K562 (cell line): ENCODE measurements at regions of chr6 and their contacts with region 1.

Region 1: DNA sequence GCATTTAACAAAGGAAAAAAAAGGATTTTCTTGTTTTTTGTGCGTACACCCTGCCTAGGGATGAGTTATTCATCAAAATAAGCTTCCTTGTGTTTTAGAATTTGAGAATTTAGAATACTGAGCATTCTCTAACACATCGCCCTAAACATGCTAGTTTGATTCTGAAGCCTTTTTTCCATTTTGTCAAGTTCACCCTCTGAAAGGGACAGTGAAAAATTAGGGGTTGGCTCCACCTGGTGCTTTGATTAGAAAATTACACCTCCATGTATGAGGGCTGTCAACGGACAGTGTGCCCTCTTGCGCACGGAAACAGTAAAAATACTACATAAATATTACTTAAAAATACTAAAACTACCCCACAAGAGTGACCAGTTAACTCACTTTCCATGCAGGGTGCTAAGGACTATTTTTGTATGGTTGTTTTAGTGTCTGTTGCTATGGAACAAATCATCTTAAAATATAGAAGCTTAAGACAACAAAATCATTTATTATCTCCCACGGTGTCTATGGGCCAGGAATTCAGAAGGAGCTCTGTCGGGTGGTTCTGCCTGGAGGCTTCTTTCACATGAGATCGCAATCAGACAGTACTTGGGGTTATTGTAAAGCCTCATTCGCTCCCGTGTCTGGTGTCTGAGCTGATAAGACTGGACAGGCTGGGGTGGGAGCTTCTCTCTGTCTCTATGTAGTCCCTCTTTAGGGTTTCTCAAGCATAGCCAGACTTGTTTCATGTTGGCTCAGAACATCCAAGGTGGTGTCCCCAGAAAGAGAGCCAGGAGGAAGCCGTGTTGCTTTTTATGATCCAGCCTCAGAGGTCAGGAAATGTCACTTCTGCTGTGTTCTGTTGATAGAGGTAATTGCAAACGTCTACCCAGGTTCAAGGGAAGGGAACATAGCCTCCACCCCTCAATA is 41.1 kb upstream of the TMEM170B start:
- DNase-seq: peak; percentile 79 to 85 (median 81)
- ATAC-seq: peak; percentile 98
- H3K4me3 ChIP-seq: no peak overlapping the region
- H3K27ac ChIP-seq: no peak overlapping the region
- H3K4me1 ChIP-seq: no peaks in the 10 kb centered on the region
- H3K27me3 ChIP-seq: peaks cover 0 to 4% of the 10 kb centered on the region in 2 experiments; a peak in 1 of 5 replicates
- CTCF ChIP-seq: peak; percentile 88 to 99 (median 99)
- EP300 ChIP-seq: no peak; the same call in 1 of the 2 replicates
- POLR2A ChIP-seq: no peak
- RAD21 ChIP-seq: peak; percentile 97 to 99

Region 2: DNA sequence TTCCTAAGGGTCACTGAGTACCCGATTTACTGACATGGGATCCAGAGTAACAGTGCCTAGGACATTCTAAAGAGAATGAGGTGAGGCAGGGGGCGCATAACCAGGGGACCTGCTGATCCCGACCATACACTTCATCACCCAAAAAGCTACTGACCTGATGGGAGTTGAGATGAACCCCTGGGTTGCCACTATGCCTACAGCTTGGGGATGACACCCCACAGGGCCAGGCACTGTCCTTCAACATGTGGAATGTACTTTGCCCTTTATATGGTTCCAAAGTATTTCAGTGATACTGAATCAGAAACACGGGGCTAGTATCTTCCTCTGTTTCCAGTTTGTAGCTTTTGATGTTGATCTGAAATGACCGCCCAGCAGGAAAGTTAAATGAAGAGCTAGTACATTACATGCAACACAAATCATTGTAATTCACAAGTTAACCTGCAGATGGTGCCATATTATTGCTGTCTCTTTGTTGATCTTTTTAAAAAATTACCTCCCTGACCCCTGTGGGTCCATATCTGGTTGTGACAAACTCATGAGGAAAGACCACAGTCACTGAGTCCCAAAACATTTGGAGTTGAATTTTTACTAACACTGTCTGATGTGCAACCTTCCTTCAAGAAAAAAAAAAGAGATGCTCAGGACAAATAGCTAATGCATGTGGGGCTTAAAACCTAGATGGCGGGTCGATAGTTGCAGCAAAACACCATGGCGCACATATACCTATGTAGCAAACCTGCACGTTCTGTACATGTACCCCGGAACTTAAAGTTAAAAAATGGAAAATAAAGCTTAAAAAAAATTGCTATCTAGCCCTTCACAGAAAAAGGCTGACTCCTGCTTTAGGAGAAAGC is 1018.0 kb before region 1 on chr6:
- CTCF ChIA-PET with region 1: interaction called, 4 read pairs
- POLR2A ChIA-PET with region 1: no interaction called
- in situ Hi-C with region 1: loop called (anchors 5 kb)
- intact Hi-C with region 1: no loop called
- DNase-seq: peak; percentile 59 to 79 (median 68)
- ATAC-seq: peak; percentile 88
- H3K4me3 ChIP-seq: no peak overlapping the region
- H3K27ac ChIP-seq: no peak overlapping the region
- H3K4me1 ChIP-seq: peaks cover 0 to 6% of the 10 kb centered on the region in 2 experiments; a peak in 1 of 5 replicates
- H3K27me3 ChIP-seq: peaks cover 0 to 15% of the 10 kb centered on the region in 2 experiments; a peak in 2 of 5 replicates
- CTCF ChIP-seq: peak; percentile 57 to 86 (median 71); a peak in 5 of 6 replicates
- EP300 ChIP-seq: no peak
- POLR2A ChIP-seq: no peak
- RAD21 ChIP-seq: peak; percentile 82 to 92

Region 3: GRCh38 chr6:10954590-10955010 is 541.8 kb before region 1 on chr6:
- CTCF ChIA-PET with region 1: interaction called, 15 read pairs
- POLR2A ChIA-PET with region 1: no interaction called
- in situ Hi-C with region 1: loop called (anchors 25 kb)
- intact Hi-C with region 1: loop called (anchors 2 kb)
- DNase-seq: peak; percentile 76 to 85 (median 80)
- ATAC-seq: peak; percentile 100
- H3K4me3 ChIP-seq: no peak overlapping the region
- H3K27ac ChIP-seq: no peak overlapping the region
- H3K4me1 ChIP-seq: no peaks in the 10 kb centered on the region; a peak in 1 of 5 replicates
- H3K27me3 ChIP-seq: no peaks in the 10 kb centered on the region
- CTCF ChIP-seq: peak; percentile 90 to 97 (median 95)
- EP300 ChIP-seq: no peak
- POLR2A ChIP-seq: 0 out of 2 replicates have a peak, but pooled peaks have one; percentile 17
- RAD21 ChIP-seq: peak; percentile 66 to 74

Region 4: GRCh38 chr6:11144393-11144851 is 352.0 kb before region 1 on chr6:
- CTCF ChIA-PET with region 1: interaction called, 68 read pairs
- POLR2A ChIA-PET with region 1: no interaction called
- in situ Hi-C with region 1: no loop called
- intact Hi-C with region 1: loop called (anchors 1 kb)
- DNase-seq: peak; percentile 81 to 88 (median 82)
- ATAC-seq: peak; percentile 97
- H3K4me3 ChIP-seq: no peak overlapping the region
- H3K27ac ChIP-seq: no peak overlapping the region
- H3K4me1 ChIP-seq: peaks cover 0 to 8% of the 10 kb centered on the region in 2 experiments; a peak in 3 of 5 replicates
- H3K27me3 ChIP-seq: peaks cover 0 to 17% of the 10 kb centered on the region in 2 experiments; a peak in 2 of 5 replicates
- CTCF ChIP-seq: peak; percentile 89 to 97 (median 96)
- EP300 ChIP-seq: no peak
- POLR2A ChIP-seq: no peak
- RAD21 ChIP-seq: peak; percentile 91 to 92

Region 5: GRCh38 chr6:11172501-11173332 is 323.7 kb before region 1 on chr6:
- CTCF ChIA-PET with region 1: interaction called, 25 read pairs
- POLR2A ChIA-PET with region 1: interaction called, 3 read pairs
- in situ Hi-C with region 1: loop called (anchors 5 kb)
- intact Hi-C with region 1: loop called (anchors 1 kb)
- DNase-seq: peak; percentile 59 to 76 (median 62)
- ATAC-seq: peak; percentile 92
- H3K4me3 ChIP-seq: no peak overlapping the region
- H3K27ac ChIP-seq: no peak overlapping the region
- H3K4me1 ChIP-seq: peaks cover 0 to 4% of the 10 kb centered on the region in 2 experiments; a peak in 2 of 5 replicates
- H3K27me3 ChIP-seq: peaks cover 11 to 19% of the 10 kb centered on the region in 2 experiments
- CTCF ChIP-seq: peak; percentile 77 to 92 (median 81)
- EP300 ChIP-seq: no peak
- POLR2A ChIP-seq: no peak
- RAD21 ChIP-seq: peak; percentile 70 to 72

Region 6: GRCh38 chr6:11241793-11242201 is 254.6 kb before region 1 on chr6:
- CTCF ChIA-PET with region 1: interaction called, 3 read pairs
- POLR2A ChIA-PET with region 1: no interaction called
- in situ Hi-C with region 1: no loop called
- intact Hi-C with region 1: loop called (anchors 1 kb)
- DNase-seq: peak; percentile 32 to 62 (median 46)
- ATAC-seq: peak; percentile 99
- H3K4me3 ChIP-seq: no peak overlapping the region
- H3K27ac ChIP-seq: no peak overlapping the region
- H3K4me1 ChIP-seq: no peaks in the 10 kb centered on the region
- H3K27me3 ChIP-seq: peaks cover 12 to 36% of the 10 kb centered on the region in 2 experiments; a peak in 4 of 5 replicates
- CTCF ChIP-seq: peak; percentile 83 to 90 (median 88)
- EP300 ChIP-seq: no peak
- POLR2A ChIP-seq: no peak
- RAD21 ChIP-seq: peak; percentile 75 to 86

Region 7: DNA sequence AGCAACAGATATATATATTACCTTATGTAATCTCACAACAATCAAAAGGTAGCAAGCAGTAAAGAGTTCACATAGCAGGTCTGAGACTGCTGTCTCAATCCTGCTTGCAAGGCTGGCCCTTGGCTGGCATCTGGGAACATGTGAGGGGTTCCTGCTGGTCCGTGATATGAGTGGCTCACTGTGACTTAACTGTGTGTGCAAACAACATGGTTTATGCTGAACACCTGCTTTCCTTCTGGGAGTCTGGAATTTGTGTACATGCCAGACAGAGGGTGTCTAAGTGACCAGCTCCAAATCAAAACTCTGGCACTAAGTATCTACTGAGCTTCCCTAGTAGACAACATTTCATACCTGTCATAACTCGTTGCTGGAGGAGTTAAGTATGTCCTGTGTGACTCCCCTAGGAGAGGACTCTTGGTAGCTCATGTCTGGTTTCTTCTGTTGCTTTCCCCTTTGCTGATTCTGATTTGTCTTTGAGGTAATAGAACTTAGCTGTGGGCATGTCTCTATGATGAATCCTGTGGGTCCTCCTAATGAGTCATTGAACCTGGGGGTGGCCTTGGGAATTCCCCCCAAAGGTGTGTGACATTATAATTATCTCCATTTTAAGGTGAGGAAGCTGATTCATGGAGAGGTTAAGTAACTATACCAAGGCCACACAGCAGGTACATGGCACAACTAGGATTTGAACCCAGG is 132.4 kb before region 1 on chr6:
- CTCF ChIA-PET with region 1: no interaction called
- POLR2A ChIA-PET with region 1: no interaction called
- in situ Hi-C with region 1: no loop called
- intact Hi-C with region 1: no loop called
- DNase-seq: no peak
- ATAC-seq: no peak
- H3K4me3 ChIP-seq: no peak overlapping the region
- H3K27ac ChIP-seq: no peak overlapping the region
- H3K4me1 ChIP-seq: no peaks in the 10 kb centered on the region
- H3K27me3 ChIP-seq: no peaks in the 10 kb centered on the region
- CTCF ChIP-seq: no peak
- EP300 ChIP-seq: no peak
- POLR2A ChIP-seq: no peak
- RAD21 ChIP-seq: no peak

Region 8: DNA sequence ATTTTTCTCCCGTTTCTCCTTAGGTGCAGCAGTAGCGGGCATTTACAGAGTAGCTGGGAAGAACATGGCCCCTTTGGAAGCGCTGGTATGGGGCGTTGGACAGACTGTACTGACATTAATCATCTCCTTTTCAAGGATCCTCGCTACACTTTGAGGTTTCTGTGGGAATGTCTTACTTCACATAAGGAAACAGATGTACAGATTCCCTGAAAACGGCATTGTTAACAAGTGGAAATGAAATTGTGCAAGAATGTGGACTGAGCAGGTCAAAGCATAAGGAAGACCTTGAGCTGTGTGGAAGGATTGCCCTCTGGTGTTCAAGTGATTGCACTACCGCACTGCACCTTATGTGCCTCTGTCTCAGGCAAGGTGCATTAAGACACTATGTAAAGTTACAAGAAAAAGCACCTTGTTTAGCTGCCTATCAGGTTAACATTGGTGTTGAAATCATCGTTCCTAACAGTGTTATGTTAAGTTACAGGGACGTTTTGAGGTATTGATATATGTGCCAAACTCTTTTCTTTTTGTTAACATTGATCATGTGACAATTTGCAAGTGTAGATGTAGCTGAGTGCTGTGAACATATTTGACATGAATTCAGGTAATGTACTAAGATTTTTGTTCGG is 79.1 kb after region 1 on chr6:
- CTCF ChIA-PET with region 1: no interaction called
- POLR2A ChIA-PET with region 1: no interaction called
- in situ Hi-C with region 1: no loop called
- intact Hi-C with region 1: loop called (anchors 1 kb)
- DNase-seq: peak; percentile 63 to 80 (median 68)
- ATAC-seq: peak; percentile 100
- H3K4me3 ChIP-seq: no peak overlapping the region
- H3K27ac ChIP-seq: no peak overlapping the region
- H3K4me1 ChIP-seq: no peaks in the 10 kb centered on the region
- H3K27me3 ChIP-seq: peaks cover 2 to 3% of the 10 kb centered on the region in 2 experiments; a peak in 1 of 5 replicates
- CTCF ChIP-seq: peak; percentile 85 to 95 (median 93)
- EP300 ChIP-seq: no peak
- POLR2A ChIP-seq: no peak
- RAD21 ChIP-seq: peak; percentile 94 to 95

Region 9: DNA sequence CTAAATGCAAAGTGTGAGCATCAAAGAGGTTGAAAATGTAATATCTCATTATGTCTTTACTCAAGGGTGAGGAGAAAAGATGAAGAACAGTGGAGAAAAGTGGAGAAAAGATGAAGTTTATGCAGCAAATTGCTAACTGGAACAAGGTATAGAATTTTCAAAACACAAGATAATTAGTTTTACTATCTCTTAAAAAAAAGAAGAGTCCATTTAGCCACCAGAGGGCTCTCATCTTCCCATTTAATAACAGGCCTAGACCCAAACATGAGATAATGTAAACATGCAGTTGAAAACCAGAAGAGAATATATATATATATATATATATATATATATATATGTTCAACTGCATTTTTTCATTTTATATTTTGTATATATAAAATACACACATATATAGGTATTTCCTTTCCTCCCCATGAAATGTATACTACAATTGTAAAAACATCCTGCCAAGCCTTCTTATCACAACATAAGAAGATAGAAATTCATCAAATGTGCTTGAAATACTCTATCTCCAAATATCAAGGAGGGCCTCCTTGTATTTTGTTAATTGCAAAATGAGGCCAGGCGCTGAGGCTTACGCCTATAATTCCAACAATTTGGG is 203.8 kb after region 1 on chr6:
- CTCF ChIA-PET with region 1: no interaction called
- POLR2A ChIA-PET with region 1: no interaction called
- in situ Hi-C with region 1: no loop called
- intact Hi-C with region 1: no loop called
- DNase-seq: peak; percentile 50 to 75 (median 57)
- ATAC-seq: peak; percentile 66
- H3K4me3 ChIP-seq: no peak overlapping the region
- H3K27ac ChIP-seq: no peak overlapping the region
- H3K4me1 ChIP-seq: no peaks in the 10 kb centered on the region; a peak in 2 of 5 replicates
- H3K27me3 ChIP-seq: no peaks in the 10 kb centered on the region
- CTCF ChIP-seq: peak; percentile 31 to 68 (median 47); a peak in 3 of 6 replicates
- EP300 ChIP-seq: no peak
- POLR2A ChIP-seq: no peak
- RAD21 ChIP-seq: peak; percentile 66 to 83